Right ventricle myocardium inferior (tissue), 1 donor: ENCODE measurements at regions of chr11 and their contacts with region 1.

Region 1: DNA sequence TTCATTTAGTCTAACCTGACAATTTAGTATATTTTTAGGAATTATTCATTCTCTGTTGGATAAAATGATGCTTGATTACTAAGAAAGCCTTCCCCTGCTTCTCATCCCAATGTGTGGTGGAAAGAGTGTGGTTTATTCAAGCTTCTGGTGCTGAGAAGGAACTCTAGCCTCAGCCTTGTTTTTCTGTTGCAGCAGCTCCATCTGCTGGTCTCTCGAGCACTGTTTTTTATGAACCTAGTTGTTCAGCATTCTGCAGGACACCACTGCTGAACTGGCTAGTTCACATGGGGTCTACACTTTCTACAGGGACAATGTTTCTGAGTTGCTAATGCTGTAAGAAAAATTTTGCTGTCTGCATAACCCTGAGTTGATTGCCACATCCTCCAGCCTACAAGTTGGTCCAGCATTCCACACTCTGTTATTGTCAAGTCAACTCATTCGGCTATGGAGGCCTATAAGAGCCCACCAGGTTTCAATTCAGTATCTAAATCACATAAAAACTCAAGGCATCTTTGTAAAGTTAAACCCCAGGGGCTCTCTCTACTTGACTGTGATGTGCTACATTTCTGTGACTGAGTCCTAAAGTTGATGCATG is 14.3 kb downstream of the OR2AG2 start:
- DNase-seq: no peak
- ATAC-seq: peak; percentile 60

Region 2: GRCh38 chr11:6705905-6706535 is 51.5 kb before region 1 on chr11:
- intact Hi-C with region 1: loop called (anchors 2 kb)
- DNase-seq: no peak
- ATAC-seq: peak; percentile 60

Region 3: GRCh38 chr11:6737872-6738466 is 19.5 kb before region 1 on chr11:
- intact Hi-C with region 1: loop called (anchors 2 kb)
- DNase-seq: no peak
- ATAC-seq: no peak